ENCODE measurements at regions of chr3 and their contacts with region 1.

Region 1: DNA sequence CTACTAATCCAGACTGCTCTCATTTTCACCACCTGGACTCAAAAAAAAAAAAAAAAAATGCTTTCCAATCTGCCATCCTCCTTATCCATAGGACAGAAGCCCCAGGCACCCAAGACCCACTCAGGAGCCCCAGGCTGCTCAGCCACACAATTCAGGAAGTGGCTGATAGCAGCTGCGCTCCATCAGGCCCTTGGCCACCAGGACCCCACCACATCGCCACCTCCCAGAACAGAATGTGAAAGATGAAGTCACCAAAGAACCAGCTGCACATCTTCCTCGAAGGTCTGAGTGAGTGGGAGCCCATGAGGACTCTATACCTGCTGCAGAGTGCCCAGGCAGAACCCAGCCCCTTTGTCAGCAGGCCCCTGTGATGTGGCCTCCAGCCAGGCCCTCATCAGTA is 19.5 kb downstream of the POC1A start:
- DNase-seq: no peak
- ATAC-seq: no peak
- H3K4me3 ChIP-seq: no peak overlapping the region
- H3K4me3 Mint-ChIP-seq: no peak overlapping the region
- H3K27ac ChIP-seq: no peak overlapping the region
- H3K27ac Mint-ChIP-seq: no peak overlapping the region
- H3K4me1 ChIP-seq: no peaks in the 10 kb centered on the region
- H3K4me1 Mint-ChIP-seq: no peaks in the 10 kb centered on the region
- H3K27me3 ChIP-seq: no peaks in the 10 kb centered on the region
- H3K27me3 Mint-ChIP-seq: no peaks in the 10 kb centered on the region
- CTCF ChIP-seq: no peak

Region 2: DNA sequence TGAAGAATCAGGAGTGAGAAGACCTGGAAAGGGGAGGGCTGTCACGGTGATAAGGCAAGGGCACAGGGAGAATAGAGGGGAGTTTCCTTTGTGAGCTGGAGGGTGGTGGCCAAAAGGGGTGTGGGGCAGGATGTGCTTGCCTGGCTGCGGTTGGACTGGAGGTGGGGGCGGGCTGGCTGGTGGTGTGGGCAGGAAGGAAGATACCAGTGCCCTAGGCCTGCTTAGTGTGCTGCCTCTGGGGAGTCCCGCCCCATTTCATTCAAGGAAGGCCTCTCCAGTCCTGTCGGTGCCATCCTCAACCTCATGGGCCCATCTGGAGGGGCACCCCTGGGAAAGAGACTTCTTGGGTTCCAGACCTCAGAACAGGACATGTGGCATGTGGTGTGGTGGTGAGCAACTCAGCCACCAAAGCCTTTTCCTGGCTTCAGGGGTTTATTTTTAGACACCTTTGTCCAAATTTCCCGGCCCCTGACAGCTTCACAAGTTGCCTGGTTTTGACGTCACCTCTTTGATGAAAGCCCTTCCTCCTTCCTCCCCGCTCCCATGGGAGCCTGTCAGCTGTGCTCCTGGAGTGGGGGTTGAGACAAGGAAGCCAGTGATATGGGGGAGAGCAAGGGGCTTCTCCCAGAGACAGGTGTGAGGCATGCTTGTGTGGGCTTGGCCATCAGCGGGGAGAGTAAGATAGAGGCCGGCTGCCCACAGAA is 448.1 kb before region 1 on chr3:
- CTCF ChIA-PET with region 1: no interaction called
- POLR2A ChIA-PET with region 1: no interaction called
- intact Hi-C with region 1: no loop called
- DNase-seq: peak; percentile 68 to 95 (median 85)
- ATAC-seq: peak; percentile 84
- H3K4me3 ChIP-seq: peak overlapping the region; percentile 14 to 32
- H3K4me3 Mint-ChIP-seq: peak overlapping the region; percentile 77
- H3K27ac ChIP-seq: peak overlapping the region; percentile 47 to 82
- H3K27ac Mint-ChIP-seq: peak overlapping the region; percentile 94
- H3K4me1 ChIP-seq: peaks cover 78% of the 10 kb centered on the region
- H3K4me1 Mint-ChIP-seq: peaks cover 75% of the 10 kb centered on the region
- H3K27me3 ChIP-seq: no peaks in the 10 kb centered on the region
- H3K27me3 Mint-ChIP-seq: no peaks in the 10 kb centered on the region
- CTCF ChIP-seq: no peak

Region 3: GRCh38 chr3:52197842-52198668 is 63.3 kb after region 1 on chr3 and contains the start of gene ALAS1:
- CTCF ChIA-PET with region 1: no interaction called
- POLR2A ChIA-PET with region 1: no interaction called
- intact Hi-C with region 1: no loop called
- DNase-seq: peak; percentile 86 to 98 (median 95)
- ATAC-seq: peak; percentile 98
- H3K4me3 ChIP-seq: peak within 1 kb of the TSS; percentile 88 to 93
- H3K4me3 Mint-ChIP-seq: peak within 1 kb of the TSS; percentile 96
- H3K27ac ChIP-seq: peak within 1 kb of the TSS; percentile 69 to 86
- H3K27ac Mint-ChIP-seq: peak within 1 kb of the TSS; percentile 94
- H3K4me1 ChIP-seq: peaks cover 32% of the 10 kb centered on the region
- H3K4me1 Mint-ChIP-seq: peaks cover 41% of the 10 kb centered on the region
- H3K27me3 ChIP-seq: no peaks in the 10 kb centered on the region
- H3K27me3 Mint-ChIP-seq: no peaks in the 10 kb centered on the region
- CTCF ChIP-seq: no peak
- total RNA-seq, gene ALAS1: 6.0 to 6.6 TPM

Region 4: DNA sequence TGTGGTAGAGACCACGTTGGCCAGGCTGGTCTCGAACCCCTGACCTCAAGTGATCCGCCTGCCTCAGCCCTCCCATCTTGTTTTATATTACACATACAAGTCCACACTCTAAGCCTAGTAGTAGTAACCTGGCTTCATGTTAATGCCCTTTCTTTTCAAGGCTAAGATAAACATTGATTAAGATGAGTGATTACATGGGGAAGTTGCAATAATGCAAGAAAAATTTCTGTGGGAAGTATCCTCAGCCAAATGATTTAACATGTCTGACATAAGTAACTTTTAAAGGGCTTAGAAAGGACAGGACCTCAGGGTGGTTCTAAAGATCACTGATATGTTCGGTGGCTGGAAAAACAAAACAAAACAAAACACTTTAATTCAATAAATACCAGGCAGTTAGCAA is 839.0 kb after region 1 on chr3:
- CTCF ChIA-PET with region 1: no interaction called
- POLR2A ChIA-PET with region 1: no interaction called
- intact Hi-C with region 1: loop called in 1 of 2 experiments (anchors 5 kb)
- DNase-seq: no peak
- ATAC-seq: no peak
- H3K4me3 ChIP-seq: no peak overlapping the region
- H3K4me3 Mint-ChIP-seq: no peak overlapping the region
- H3K27ac ChIP-seq: no peak overlapping the region
- H3K27ac Mint-ChIP-seq: no peak overlapping the region
- H3K4me1 ChIP-seq: no peaks in the 10 kb centered on the region
- H3K4me1 Mint-ChIP-seq: peaks cover 25% of the 10 kb centered on the region
- H3K27me3 ChIP-seq: no peaks in the 10 kb centered on the region
- H3K27me3 Mint-ChIP-seq: no peaks in the 10 kb centered on the region
- CTCF ChIP-seq: no peak

Measured in CD8-positive, alpha-beta T cell (primary cell).